Heart right ventricle (tissue), 16 donors: ENCODE measurements at regions of chr20 and their contacts with region 1.

Region 1: GRCh38 chr20:6704132-6704861 is 63.2 kb upstream of the BMP2 start:
- DNase-seq: no peak
- ATAC-seq: peak; percentile 46 to 77 (median 66)
- H3K4me3 ChIP-seq: no peak overlapping the region
- H3K27ac ChIP-seq: peak overlapping the region; percentile 38 to 79 (median 65)
- H3K4me1 ChIP-seq: peaks cover 0 to 62% (median 25%) of the 10 kb centered on the region in 9 donors
- H3K27me3 ChIP-seq: no peaks in the 10 kb centered on the region
- CTCF ChIP-seq: no peak

Region 2: DNA sequence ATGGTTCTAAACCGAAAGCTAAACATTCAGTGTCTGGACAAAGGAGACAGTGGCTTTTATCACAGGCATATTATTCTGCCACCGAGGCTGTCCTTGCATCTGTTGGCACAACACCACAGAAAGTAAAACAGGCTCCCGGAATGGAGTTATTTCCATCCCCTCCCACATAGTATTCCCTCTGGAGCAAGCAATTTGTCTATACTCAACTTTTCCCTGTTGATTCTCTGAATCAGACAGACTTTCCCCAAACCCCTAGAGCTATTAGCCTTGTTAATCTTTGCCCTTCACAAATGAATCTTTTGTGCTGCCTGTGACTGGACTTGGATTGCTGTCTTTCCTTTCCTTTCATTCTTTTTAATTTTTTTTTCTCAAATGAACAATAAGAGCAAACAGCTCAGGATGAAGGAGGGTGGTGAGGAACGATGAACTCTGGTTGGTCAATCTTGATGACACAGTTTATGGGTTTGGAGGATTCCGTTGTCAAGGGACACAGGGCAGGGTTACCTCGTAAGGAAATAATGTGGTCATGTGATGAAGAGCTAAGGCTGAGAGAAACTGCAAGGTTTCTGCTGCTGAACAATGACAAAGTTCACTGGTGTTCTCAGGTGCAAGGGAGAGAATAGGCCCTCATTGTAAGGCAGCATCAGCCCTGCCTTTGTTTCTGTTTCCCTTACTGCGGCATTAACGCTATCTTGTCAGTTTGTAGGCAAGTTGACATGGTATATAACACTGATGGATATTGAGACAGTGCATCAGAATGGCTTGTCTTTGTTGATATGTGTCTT is 211.8 kb before region 1 on chr20:
- intact Hi-C with region 1: no loop called
- DNase-seq: no peak
- ATAC-seq: peak in 1 of 8 donors; percentile 60
- H3K4me3 ChIP-seq: no peak overlapping the region
- H3K27ac ChIP-seq: no peak overlapping the region
- H3K4me1 ChIP-seq: peaks cover 0 to 4% (median 0%) of the 10 kb centered on the region in 9 donors
- H3K27me3 ChIP-seq: no peaks in the 10 kb centered on the region
- CTCF ChIP-seq: no peak

Region 3: DNA sequence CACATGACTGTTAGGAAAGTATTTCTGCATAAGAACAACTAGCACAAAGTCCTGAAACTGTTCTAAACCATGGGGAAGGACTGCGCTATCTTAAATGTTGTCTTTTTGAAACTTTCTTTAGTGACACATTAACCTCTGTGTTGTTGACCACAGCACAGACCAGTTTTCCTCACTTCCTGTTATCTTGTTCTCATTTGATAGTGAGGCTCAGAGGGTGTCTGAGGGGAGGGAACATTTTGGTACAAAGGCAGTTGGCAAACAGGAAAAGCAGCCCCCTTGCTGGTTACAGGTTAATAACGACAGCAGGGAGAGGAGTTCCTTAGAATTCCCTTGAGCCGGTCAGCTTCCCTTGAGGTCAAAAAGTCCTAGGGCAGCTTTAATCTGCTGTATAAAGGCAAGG is 80.3 kb before region 1 on chr20:
- intact Hi-C with region 1: no loop called
- DNase-seq: no peak
- ATAC-seq: no peak
- H3K4me3 ChIP-seq: no peak overlapping the region
- H3K27ac ChIP-seq: no peak overlapping the region
- H3K4me1 ChIP-seq: no peaks in the 10 kb centered on the region
- H3K27me3 ChIP-seq: no peaks in the 10 kb centered on the region
- CTCF ChIP-seq: no peak

Region 4: DNA sequence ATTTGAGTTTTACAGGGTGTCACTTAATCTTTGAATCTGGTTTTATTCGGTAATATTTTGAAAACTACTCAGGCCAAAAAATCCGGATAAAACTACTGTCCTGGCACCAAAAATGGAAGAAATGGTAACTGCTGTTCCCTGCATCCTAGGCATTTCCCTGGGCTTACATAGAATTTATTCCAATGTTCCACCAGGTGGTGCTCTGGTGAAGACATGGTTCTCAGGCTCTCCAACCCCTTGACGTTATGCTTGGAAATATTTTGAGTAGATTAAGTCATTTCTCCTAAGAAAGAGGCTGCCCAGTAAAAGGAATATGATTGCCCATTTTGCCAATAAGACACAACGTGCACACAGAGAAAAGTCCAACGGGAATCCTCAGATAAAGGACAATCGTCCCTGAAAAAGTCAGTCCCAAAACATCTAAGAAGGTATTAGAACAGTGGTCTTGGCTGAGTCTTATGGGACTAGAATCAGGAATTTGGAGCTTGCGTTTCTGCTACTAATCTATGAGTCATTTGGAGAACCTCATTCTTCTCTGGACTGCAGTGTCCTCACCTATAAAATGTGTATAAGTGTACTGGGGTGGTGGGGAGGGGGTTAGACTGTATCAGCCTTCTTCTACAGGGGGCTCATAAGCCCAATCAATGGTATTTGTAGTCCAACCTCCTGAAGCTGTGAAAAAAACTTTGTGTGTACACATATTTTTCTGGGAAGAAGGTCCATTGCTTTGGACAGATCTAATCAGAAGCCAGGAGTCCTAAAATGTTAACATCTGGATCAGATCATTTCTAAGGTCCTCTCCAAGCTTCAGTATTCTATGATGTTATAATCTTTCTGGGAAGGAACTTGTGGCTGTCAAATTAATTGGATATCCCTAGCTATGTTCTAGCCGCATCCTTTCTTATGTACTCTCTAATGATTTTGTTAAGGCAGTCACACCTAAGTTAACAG is 67.8 kb before region 1 on chr20:
- intact Hi-C with region 1: loop called in 1 of 10 experiments (anchors 5 kb)
- DNase-seq: peak in 1 of 2 donors; percentile 45
- ATAC-seq: peak; percentile 64 to 90 (median 84)
- H3K4me3 ChIP-seq: no peak overlapping the region
- H3K27ac ChIP-seq: peak overlapping the region in 1 of 10 donors; percentile 7
- H3K4me1 ChIP-seq: peaks cover 0 to 7% (median 0%) of the 10 kb centered on the region in 9 donors
- H3K27me3 ChIP-seq: peaks cover 0 to 5% (median 0%) of the 10 kb centered on the region in 7 donors
- CTCF ChIP-seq: peak; percentile 24 to 68 (median 58)

Region 5: DNA sequence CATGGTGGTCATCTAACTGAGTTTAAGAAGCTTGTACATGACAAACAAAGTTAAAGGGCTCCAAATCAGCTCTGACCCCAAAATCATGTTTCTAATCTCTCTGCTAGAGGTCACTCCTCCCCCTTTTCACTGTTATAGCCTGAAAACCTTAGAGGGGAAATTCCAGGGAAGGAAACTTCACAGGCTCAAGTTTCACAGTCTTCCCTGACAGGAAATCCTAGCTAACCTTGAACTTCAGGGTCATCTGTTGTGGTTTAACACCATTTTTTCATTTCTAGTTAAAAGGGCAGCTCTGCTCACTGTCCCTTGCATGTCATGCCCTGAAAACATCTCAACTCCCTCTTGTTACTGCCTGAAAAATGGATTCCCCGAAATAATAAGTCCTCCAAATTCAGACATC is 41.2 kb before region 1 on chr20:
- intact Hi-C with region 1: no loop called
- DNase-seq: no peak
- ATAC-seq: no peak
- H3K4me3 ChIP-seq: no peak overlapping the region
- H3K27ac ChIP-seq: no peak overlapping the region
- H3K4me1 ChIP-seq: no peaks in the 10 kb centered on the region
- H3K27me3 ChIP-seq: no peaks in the 10 kb centered on the region
- CTCF ChIP-seq: no peak

Region 6: DNA sequence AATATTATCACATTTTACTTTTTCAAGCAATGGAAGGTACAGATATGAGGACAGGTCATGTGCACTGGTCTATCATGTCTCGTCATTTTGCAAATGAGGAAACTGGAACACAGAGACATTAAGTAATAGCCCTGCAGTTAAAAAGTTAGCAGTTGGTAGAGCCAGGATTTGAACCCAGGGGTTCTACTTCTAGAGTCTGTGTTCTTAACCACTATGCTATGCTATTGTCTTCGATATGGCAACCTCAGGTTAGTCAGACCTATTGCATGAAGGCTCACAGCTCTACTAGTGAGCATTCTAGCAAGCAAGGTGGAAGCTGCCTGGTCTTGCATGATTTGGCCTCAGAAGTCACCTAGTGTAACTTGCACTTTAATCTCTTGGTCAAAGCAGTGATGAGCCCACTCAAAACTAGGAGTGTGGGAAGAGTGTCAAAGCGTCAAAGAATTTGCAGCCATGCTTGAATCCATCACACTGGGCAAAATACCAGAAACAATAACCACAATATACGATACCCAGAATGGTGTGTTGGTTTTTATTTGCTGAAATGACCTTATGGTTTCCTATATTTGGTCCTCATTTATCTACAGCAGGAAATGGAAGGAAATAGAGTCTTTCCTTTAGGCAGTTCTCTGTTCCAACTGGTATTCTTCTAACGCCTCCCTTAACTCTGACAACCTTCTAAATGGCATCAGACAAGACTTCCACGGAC is 42.8 kb after region 1 on chr20:
- intact Hi-C with region 1: loop called in 1 of 10 experiments (anchors 1 kb)
- DNase-seq: no peak
- ATAC-seq: no peak
- H3K4me3 ChIP-seq: no peak overlapping the region
- H3K27ac ChIP-seq: no peak overlapping the region
- H3K4me1 ChIP-seq: no peaks in the 10 kb centered on the region
- H3K27me3 ChIP-seq: peaks cover 0 to 10% (median 0%) of the 10 kb centered on the region in 7 donors
- CTCF ChIP-seq: no peak

Region 7: DNA sequence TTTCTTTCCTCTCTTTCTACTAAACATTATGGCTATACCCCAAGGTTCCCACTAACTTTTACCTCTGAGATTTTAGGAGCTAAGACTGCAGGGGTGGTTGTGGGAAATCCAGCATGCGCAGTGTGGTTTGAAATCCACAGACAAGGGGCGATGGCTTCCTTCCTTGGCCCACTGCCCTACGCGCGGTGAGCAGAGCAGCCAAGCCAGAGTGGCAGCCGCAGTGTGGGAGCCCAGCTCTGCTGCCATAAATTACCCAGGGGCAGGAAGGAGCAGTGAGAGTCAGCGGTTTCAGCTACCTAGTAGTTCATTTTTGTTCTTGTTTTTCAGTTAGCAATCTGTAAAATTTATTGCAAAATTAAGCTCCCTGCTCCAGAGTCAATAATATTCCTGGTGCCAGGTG is 164.6 kb after region 1 on chr20:
- intact Hi-C with region 1: no loop called
- DNase-seq: no peak
- ATAC-seq: no peak
- H3K4me3 ChIP-seq: no peak overlapping the region
- H3K27ac ChIP-seq: no peak overlapping the region
- H3K4me1 ChIP-seq: no peaks in the 10 kb centered on the region
- H3K27me3 ChIP-seq: peaks cover 0 to 21% (median 5%) of the 10 kb centered on the region in 7 donors
- CTCF ChIP-seq: no peak